Thyroid gland (tissue), 4 donors: ENCODE measurements at regions of chr6 and their contacts with region 1.

Region 1: GRCh38 chr6:37691904-37692806 is 5.5 kb downstream of the MDGA1 start:
- DNase-seq: peak; percentile 71 to 74
- H3K4me3 ChIP-seq: no peak overlapping the region
- H3K27ac ChIP-seq: no peak overlapping the region
- H3K4me1 ChIP-seq: peaks cover 3 to 12% of the 10 kb centered on the region in 2 donors
- H3K27me3 ChIP-seq: peaks cover 7% of the 10 kb centered on the region
- CTCF ChIP-seq: peak; percentile 85 to 97 (median 96)
- POLR2A ChIP-seq: no peak

Region 2: DNA sequence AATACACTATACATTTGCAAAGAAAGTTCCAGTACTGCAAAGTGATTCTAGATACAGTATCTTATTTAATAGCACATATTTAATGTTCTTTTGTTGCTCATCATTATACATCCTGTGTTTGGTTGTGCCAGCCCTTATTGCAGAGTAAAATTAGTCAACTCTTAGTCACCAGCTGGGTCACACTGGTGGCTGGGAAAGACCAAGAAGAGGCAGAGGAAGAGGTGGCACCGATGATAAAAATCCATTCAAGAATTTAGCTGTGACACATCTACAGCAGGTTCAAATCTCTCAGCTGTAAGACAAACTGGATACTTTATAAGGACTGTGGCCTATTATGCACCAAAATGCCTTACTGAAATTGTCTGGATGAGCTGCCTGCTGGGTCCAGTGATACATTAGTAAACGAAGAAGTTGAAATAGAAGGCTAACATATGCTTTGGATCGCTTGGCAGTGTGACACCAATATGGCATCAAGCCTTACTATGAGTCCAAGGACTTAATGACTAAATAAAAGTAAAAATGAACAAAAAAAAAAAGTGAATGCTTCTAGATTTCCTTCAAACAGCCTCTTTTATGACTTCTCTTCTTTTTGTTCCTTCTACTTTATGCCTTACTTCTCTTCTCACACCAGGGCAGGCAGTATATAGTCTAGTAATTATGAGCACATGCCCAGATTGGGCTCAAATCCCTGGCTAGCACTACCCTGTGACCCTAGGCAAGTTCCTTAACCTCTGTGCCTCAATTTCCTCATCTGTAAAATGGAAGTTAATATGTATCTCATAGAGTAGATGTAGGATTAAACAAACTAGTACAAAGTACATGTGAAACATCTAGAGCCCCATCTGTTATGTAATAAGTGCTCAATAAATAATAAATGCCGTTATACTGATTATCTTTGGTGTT is 367.8 kb before region 1 on chr6:
- intact Hi-C with region 1: loop called (anchors 5 kb)
- DNase-seq: no peak
- H3K4me3 ChIP-seq: no peak overlapping the region
- H3K27ac ChIP-seq: no peak overlapping the region
- H3K4me1 ChIP-seq: peaks cover 0 to 5% of the 10 kb centered on the region in 2 donors
- H3K27me3 ChIP-seq: no peaks in the 10 kb centered on the region
- CTCF ChIP-seq: no peak
- POLR2A ChIP-seq: no peak

Region 3: GRCh38 chr6:37381579-37381978 is 310.6 kb before region 1 on chr6:
- intact Hi-C with region 1: loop called (anchors 5 kb)
- DNase-seq: peak; percentile 81
- H3K4me3 ChIP-seq: no peak overlapping the region
- H3K27ac ChIP-seq: no peak overlapping the region
- H3K4me1 ChIP-seq: peaks cover 0 to 3% of the 10 kb centered on the region in 2 donors
- H3K27me3 ChIP-seq: no peaks in the 10 kb centered on the region
- CTCF ChIP-seq: peak; percentile 12 to 90 (median 78)
- POLR2A ChIP-seq: no peak

Region 4: GRCh38 chr6:37483917-37484785 is 208.0 kb before region 1 on chr6:
- intact Hi-C with region 1: loop called (anchors 5 kb)
- DNase-seq: peak; percentile 65 to 68
- H3K4me3 ChIP-seq: no peak overlapping the region
- H3K27ac ChIP-seq: no peak overlapping the region
- H3K4me1 ChIP-seq: peaks cover 24 to 37% of the 10 kb centered on the region in 2 donors
- H3K27me3 ChIP-seq: no peaks in the 10 kb centered on the region
- CTCF ChIP-seq: peak; percentile 44 to 88 (median 68)
- POLR2A ChIP-seq: no peak

Region 5: DNA sequence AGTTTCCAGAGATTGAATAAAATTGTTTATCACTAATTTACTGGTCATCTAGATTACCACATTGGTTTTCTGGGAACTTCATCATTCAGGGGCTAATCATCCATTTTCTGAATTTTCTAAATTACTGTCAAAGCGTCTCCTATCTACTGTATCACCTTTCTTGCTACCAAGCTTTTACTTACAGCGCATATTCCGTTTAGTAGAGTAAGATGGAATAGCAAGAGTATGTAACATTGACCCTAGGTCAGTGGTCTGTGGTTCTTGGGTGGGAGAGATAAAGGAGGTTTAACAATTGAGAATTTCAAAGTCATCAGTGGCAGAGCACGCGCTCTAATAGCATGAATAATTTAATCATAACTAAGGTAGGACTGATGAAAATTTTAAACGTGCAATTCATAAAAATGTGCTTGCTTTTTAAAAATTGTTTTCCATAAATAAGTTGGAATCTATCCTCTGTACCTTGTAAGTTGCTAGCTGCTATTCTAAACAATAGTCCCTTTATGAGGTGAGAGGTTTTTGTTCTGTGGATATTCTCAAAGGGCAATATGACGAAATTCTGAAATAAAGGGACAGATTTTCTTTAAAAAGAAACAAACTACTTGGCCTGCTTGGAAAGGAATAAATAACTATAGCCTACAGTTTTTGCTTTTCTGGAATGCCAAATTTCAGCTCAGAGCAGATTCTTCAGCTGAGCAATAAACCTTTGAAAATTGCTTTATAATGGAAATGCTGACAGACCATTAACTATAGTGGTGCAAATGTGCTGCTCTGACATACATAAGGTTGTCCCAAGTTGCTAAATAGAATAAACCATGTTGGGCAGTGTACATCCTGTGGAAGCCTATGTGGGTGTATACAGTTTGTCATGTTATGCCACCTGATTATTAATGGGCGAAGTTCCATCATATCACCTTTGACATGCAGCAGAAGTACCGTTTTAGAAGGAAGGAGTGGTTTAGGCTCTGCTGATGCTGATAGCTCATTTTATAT is 211.5 kb after region 1 on chr6:
- intact Hi-C with region 1: no loop called
- DNase-seq: no peak
- H3K4me3 ChIP-seq: no peak overlapping the region
- H3K27ac ChIP-seq: no peak overlapping the region
- H3K4me1 ChIP-seq: peaks cover 12% of the 10 kb centered on the region in 2 donors
- H3K27me3 ChIP-seq: no peaks in the 10 kb centered on the region
- CTCF ChIP-seq: no peak
- POLR2A ChIP-seq: no peak